ENCODE measurements at regions of chr2 and their contacts with region 1.

Region 1: DNA sequence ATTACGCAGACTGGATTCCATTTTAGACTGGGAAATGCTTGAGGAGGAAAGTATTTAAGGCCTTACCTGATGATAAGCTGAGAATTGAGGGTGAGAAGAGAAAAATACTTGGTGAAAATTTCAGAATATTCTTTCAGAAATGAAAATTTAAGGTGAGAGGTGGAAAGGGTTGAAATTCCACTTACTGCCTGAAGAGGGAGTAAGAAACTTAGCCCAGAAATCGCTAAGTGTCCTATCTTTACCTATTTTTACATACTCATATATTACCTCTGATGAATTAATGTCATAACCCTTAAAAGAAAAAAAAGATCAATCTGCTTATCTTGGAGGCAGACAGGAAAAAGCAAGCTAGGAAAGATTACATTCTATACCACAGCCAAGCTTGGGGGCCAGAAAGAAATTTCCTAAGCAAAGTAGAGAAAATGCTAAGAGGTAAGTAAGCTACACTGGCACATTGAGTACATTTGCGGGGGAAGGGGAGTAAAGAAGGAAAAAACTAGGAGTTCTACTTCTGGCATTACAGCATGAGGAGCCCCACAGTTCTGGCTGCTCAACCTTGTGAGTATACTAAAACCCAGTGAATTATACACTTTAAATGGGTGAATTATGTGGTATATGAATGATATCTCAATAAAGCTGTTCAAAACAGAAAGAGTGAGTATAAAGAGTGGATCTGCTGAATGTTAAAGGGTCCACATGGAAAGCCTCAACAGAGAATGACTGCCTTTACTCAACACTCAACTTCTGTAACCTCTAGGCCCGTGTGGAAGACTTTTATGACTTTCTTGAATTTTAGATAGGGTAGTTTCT is 33.8 kb downstream of the SMC6 start:
- DNase-seq: no peak
- ATAC-seq: no peak
- H3K4me3 ChIP-seq: no peak overlapping the region
- H3K27ac ChIP-seq: no peak overlapping the region
- H3K4me1 ChIP-seq: no peaks in the 10 kb centered on the region
- H3K27me3 ChIP-seq: no peaks in the 10 kb centered on the region
- CTCF ChIP-seq: peak; percentile 71 to 85 (median 83)

Region 2: DNA sequence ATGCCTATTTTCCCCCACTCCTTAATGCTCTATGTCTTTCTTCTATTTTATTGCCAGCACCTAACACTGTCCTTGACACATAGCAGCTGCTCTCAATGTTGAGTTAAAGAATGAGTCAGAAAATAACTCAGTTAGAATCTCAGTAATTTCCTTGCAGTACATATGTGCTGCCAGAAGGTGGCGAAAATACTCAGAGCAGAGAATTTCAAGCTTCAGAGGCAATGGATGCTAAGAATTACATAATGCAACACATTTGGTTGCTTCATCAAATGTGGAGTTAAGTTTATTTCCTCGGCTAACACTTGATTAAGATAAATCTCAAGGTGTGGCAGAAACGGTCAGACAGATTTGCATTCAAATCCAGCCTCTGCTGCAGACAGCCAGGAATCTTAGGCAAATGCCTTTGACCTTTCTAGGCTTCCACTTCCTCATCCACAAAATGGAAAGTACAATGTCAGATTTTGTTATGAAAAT is 73.6 kb before region 1 on chr2:
- intact Hi-C with region 1: loop called in 1 of 10 experiments (anchors 2 kb)
- DNase-seq: peak in 1 of 2 donors; percentile 71
- ATAC-seq: peak; percentile 51 to 77 (median 66)
- H3K4me3 ChIP-seq: no peak overlapping the region
- H3K27ac ChIP-seq: peak overlapping the region in 6 of 10 donors; percentile 2 to 55 (median 33)
- H3K4me1 ChIP-seq: peaks cover 0 to 46% (median 30%) of the 10 kb centered on the region in 9 donors
- H3K27me3 ChIP-seq: no peaks in the 10 kb centered on the region
- CTCF ChIP-seq: peak; percentile 75 to 90 (median 84)

Region 3: GRCh38 chr2:17667898-17668297 is 51.9 kb before region 1 on chr2:
- intact Hi-C with region 1: no loop called
- DNase-seq: no peak
- ATAC-seq: no peak
- H3K4me3 ChIP-seq: no peak overlapping the region
- H3K27ac ChIP-seq: no peak overlapping the region
- H3K4me1 ChIP-seq: peaks cover 0 to 3% (median 0%) of the 10 kb centered on the region in 9 donors
- H3K27me3 ChIP-seq: no peaks in the 10 kb centered on the region
- CTCF ChIP-seq: no peak

Region 4: GRCh38 chr2:17821535-17822444 is 102.0 kb after region 1 on chr2:
- intact Hi-C with region 1: loop called in 3 of 10 experiments (anchors 5 to 10 kb)
- DNase-seq: no peak
- ATAC-seq: peak; percentile 48 to 84 (median 72)
- H3K4me3 ChIP-seq: no peak overlapping the region
- H3K27ac ChIP-seq: peak overlapping the region; percentile 52 to 87 (median 81)
- H3K4me1 ChIP-seq: peaks cover 10 to 41% (median 33%) of the 10 kb centered on the region in 9 donors
- H3K27me3 ChIP-seq: no peaks in the 10 kb centered on the region
- CTCF ChIP-seq: no peak

Region 5: GRCh38 chr2:17830053-17831034 is 110.6 kb after region 1 on chr2:
- intact Hi-C with region 1: loop called in 9 of 10 experiments (anchors 2 to 10 kb)
- DNase-seq: peak; percentile 72 to 83
- ATAC-seq: peak; percentile 83 to 97 (median 94)
- H3K4me3 ChIP-seq: peak overlapping the region in 6 of 10 donors; percentile 14 to 39 (median 26)
- H3K27ac ChIP-seq: no peak overlapping the region
- H3K4me1 ChIP-seq: peaks cover 0 to 11% (median 7%) of the 10 kb centered on the region in 9 donors
- H3K27me3 ChIP-seq: peaks cover 0 to 19% (median 0%) of the 10 kb centered on the region in 7 donors
- CTCF ChIP-seq: peak; percentile 67 to 97 (median 92)

Region 6: DNA sequence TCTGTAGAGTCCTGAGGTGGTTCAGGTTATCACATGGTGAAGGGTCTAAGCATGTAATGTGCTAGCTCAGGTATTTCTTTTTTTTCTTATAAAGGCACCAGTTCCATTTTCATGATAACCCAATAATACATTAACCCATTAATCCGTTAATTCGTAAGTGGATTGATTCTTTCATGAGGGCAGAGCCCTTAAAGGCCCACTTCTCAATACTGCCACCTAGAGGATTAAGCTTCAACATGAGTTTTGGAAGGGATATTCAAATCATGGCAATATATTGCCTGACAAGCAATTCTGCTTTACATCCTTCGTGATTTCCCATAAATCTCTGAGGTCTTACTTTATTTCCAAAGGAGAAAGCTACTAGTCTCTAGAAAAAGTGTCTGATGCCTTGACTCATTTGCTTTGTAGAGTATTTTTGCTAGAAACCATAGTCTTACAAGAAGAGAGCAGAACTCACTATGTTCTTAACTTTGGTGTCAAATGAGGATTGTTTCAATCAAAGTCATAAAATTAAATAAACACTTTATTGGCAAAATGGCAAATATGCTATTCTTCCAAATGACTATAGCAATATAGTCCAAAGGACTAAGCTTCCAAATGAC is 430.0 kb after region 1 on chr2:
- intact Hi-C with region 1: loop called in 2 of 10 experiments (anchors 10 kb)
- DNase-seq: no peak
- ATAC-seq: peak in 1 of 8 donors; percentile 35
- H3K4me3 ChIP-seq: no peak overlapping the region
- H3K27ac ChIP-seq: no peak overlapping the region
- H3K4me1 ChIP-seq: no peaks in the 10 kb centered on the region
- H3K27me3 ChIP-seq: peaks cover 0 to 6% (median 0%) of the 10 kb centered on the region in 7 donors
- CTCF ChIP-seq: peak; percentile 37 to 79 (median 74)

Region 7: GRCh38 chr2:18378020-18378653 is 658.4 kb after region 1 on chr2:
- intact Hi-C with region 1: loop called in 2 of 10 experiments (anchors 5 to 10 kb)
- DNase-seq: peak in 1 of 2 donors; percentile 9
- ATAC-seq: peak in 3 of 8 donors; percentile 42 to 66 (median 42)
- H3K4me3 ChIP-seq: no peak overlapping the region
- H3K27ac ChIP-seq: no peak overlapping the region
- H3K4me1 ChIP-seq: peaks cover 0 to 3% (median 0%) of the 10 kb centered on the region in 9 donors
- H3K27me3 ChIP-seq: peaks cover 0 to 26% (median 10%) of the 10 kb centered on the region in 7 donors
- CTCF ChIP-seq: peak; percentile 54 to 88 (median 79)